ENCODE measurements at regions of chr10 and their contacts with region 1.

Region 1: DNA sequence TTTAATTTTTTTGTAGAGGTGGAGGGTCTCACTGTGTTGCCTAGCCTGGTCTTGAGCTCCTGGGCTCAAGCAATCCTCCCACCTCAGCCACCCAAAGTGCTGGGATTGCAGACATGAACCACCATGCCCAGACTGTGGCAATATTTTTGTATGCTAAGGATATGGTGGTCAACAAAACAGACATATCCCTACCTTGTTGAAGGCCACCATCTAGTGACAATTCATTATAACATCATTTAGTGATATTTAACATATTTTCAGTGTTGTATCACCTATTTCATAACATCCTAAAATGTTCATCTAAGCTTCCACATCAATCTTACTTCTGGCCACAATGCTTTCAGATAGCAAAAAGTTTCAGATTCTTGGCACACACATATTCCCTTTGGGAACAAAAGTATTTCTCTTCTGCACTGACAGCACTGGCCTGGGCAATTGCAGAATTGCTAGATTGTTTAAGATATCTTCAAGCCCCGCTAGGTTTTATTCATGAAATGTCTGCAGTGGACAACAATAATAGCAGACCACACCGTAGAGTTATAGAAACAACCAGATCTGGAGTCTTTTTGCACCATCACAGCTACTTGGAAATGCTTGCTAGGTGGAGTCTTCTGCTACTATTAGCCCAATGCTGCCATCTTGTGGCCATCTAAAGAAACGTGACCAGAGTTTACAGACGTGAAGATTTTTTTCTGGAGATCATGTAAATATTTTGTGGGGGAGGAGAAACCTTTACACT is 58.4 kb downstream of the DNAJC12 start:
- DNase-seq: peak; percentile 75
- H3K4me3 ChIP-seq: no peak overlapping the region
- H3K27ac ChIP-seq: no peak overlapping the region
- H3K4me1 ChIP-seq: peaks cover 22% of the 10 kb centered on the region
- H3K27me3 ChIP-seq: peaks cover 0 to 5% of the 10 kb centered on the region in 2 experiments
- CTCF ChIP-seq: peak; percentile 40 to 62
- POLR2A ChIP-seq: no peak

Region 2: GRCh38 chr10:67520924-67521520 is 258.6 kb before region 1 on chr10:
- CTCF ChIA-PET with region 1: interaction called, 8 read pairs
- POLR2A ChIA-PET with region 1: no interaction called
- dilution Hi-C with region 1: no loop called
- intact Hi-C with region 1: loop called (anchors 2 kb)
- DNase-seq: peak; percentile 54
- H3K4me3 ChIP-seq: no peak overlapping the region
- H3K27ac ChIP-seq: no peak overlapping the region
- H3K4me1 ChIP-seq: no peaks in the 10 kb centered on the region
- H3K27me3 ChIP-seq: no peaks in the 10 kb centered on the region
- CTCF ChIP-seq: peak; percentile 63 to 65
- POLR2A ChIP-seq: no peak

Region 3: GRCh38 chr10:67666416-67667034 is 113.1 kb before region 1 on chr10:
- CTCF ChIA-PET with region 1: interaction called, 197 read pairs
- POLR2A ChIA-PET with region 1: no interaction called
- dilution Hi-C with region 1: no loop called
- intact Hi-C with region 1: loop called (anchors 1 kb)
- DNase-seq: peak; percentile 61
- H3K4me3 ChIP-seq: no peak overlapping the region
- H3K27ac ChIP-seq: peak overlapping the region; percentile 30
- H3K4me1 ChIP-seq: peaks cover 17% of the 10 kb centered on the region
- H3K27me3 ChIP-seq: no peaks in the 10 kb centered on the region
- CTCF ChIP-seq: peak; percentile 17 to 36
- POLR2A ChIP-seq: no peak

Region 4: GRCh38 chr10:67705921-67706320 is 73.7 kb before region 1 on chr10:
- CTCF ChIA-PET with region 1: interaction called, 13 read pairs
- POLR2A ChIA-PET with region 1: no interaction called
- dilution Hi-C with region 1: no loop called
- intact Hi-C with region 1: no loop called
- DNase-seq: no peak
- H3K4me3 ChIP-seq: no peak overlapping the region
- H3K27ac ChIP-seq: no peak overlapping the region
- H3K4me1 ChIP-seq: no peaks in the 10 kb centered on the region
- H3K27me3 ChIP-seq: no peaks in the 10 kb centered on the region
- CTCF ChIP-seq: no peak
- POLR2A ChIP-seq: no peak

Region 5: DNA sequence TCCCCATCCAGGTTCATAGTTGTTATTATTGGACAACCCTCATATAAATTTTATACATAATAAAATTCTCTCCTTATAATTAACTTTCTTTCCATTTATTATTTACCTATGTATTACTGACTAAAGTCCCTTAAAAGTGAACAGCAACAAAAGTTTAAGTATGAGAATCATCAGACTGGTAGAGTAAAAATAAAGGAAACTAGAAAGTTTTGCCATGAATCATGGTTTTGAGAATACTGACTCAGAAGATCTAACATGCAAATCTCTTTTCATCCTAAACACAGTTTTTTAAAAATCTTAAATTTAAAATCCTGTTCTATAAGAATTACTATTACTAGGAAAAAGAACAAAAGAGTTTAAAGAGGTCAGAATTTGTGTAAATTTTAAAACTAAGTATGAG is 263.4 kb after region 1 on chr10:
- CTCF ChIA-PET with region 1: no interaction called
- POLR2A ChIA-PET with region 1: no interaction called
- dilution Hi-C with region 1: no loop called
- intact Hi-C with region 1: no loop called
- DNase-seq: no peak
- H3K4me3 ChIP-seq: no peak overlapping the region
- H3K27ac ChIP-seq: no peak overlapping the region
- H3K4me1 ChIP-seq: no peaks in the 10 kb centered on the region
- H3K27me3 ChIP-seq: no peaks in the 10 kb centered on the region
- CTCF ChIP-seq: no peak
- POLR2A ChIP-seq: no peak

Measured in endothelial cell of umbilical vein (primary cell).